ENCODE measurements at regions of chr22 and their contacts with region 1.

Region 1: GRCh38 chr22:46122511-46122971 is 27.8 kb upstream of the PPARA start:
- DNase-seq: peak; percentile 83
- H3K4me3 Mint-ChIP-seq: no peak overlapping the region
- H3K27ac Mint-ChIP-seq: no peak overlapping the region
- H3K4me1 Mint-ChIP-seq: peaks cover 8% of the 10 kb centered on the region
- H3K27me3 Mint-ChIP-seq: peaks cover 7% of the 10 kb centered on the region
- CTCF ChIP-seq: peak; percentile 97

Region 2: GRCh38 chr22:46108564-46109473 is 13.7 kb before region 1 on chr22:
- CTCF ChIA-PET with region 1: no interaction called
- intact Hi-C with region 1: no loop called
- DNase-seq: peak; percentile 44
- H3K4me3 Mint-ChIP-seq: no peak overlapping the region
- H3K27ac Mint-ChIP-seq: peak overlapping the region; percentile 84
- H3K4me1 Mint-ChIP-seq: peaks cover 32% of the 10 kb centered on the region
- H3K27me3 Mint-ChIP-seq: no peaks in the 10 kb centered on the region
- CTCF ChIP-seq: peak; percentile 16

Region 3: GRCh38 chr22:46309526-46310085 is 187.1 kb after region 1 on chr22:
- CTCF ChIA-PET with region 1: interaction called, 6 read pairs
- intact Hi-C with region 1: loop called (anchors 1 kb)
- DNase-seq: no peak
- H3K4me3 Mint-ChIP-seq: no peak overlapping the region
- H3K27ac Mint-ChIP-seq: no peak overlapping the region
- H3K4me1 Mint-ChIP-seq: peaks cover 8% of the 10 kb centered on the region
- H3K27me3 Mint-ChIP-seq: no peaks in the 10 kb centered on the region
- CTCF ChIP-seq: no peak

Region 4: GRCh38 chr22:46542011-46542985 is 419.8 kb after region 1 on chr22:
- CTCF ChIA-PET with region 1: no interaction called
- intact Hi-C with region 1: loop called (anchors 5 kb)
- DNase-seq: peak; percentile 91
- H3K4me3 Mint-ChIP-seq: no peak overlapping the region
- H3K27ac Mint-ChIP-seq: no peak overlapping the region
- H3K4me1 Mint-ChIP-seq: peaks cover 32% of the 10 kb centered on the region
- H3K27me3 Mint-ChIP-seq: no peaks in the 10 kb centered on the region
- CTCF ChIP-seq: peak; percentile 97